Caco-2 (cell line): ENCODE measurements at regions of chr3 and their contacts with region 1.

Region 1: GRCh38 chr3:79521238-79521848 is 246.5 kb downstream of the ROBO1 start:
- DNase-seq: peak in 1 of 2 experiments; percentile 48
- H3K4me3 ChIP-seq: no peak overlapping the region
- H3K4me3 Mint-ChIP-seq: no peak overlapping the region
- H3K27ac Mint-ChIP-seq: no peak overlapping the region
- H3K4me1 ChIP-seq: no peaks in the 10 kb centered on the region
- H3K4me1 Mint-ChIP-seq: no peaks in the 10 kb centered on the region
- H3K27me3 ChIP-seq: no peaks in the 10 kb centered on the region
- H3K27me3 Mint-ChIP-seq: peaks cover 1% of the 10 kb centered on the region
- CTCF ChIP-seq: peak in 1 of 2 experiments; percentile 39

Region 2: DNA sequence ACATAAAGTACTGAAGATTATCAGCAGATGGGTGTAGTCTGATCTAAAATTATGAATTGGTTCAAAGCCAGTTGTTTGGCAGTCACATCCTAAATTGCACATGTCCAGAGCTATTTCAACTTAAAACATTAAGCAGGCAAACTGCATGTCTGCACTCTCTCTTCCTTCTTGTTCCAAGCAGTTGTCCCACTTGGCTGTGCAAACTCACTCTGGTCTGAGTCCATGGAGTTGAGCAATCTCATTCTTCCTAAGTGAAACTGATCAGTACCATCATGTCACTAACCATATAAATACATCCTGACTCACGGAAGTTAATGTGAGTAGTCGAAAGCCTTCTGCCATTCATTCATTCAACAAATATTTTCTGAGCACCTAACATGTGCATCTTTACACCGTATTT is 106.5 kb before region 1 on chr3:
- CTCF ChIA-PET with region 1: no interaction called
- POLR2A ChIA-PET with region 1: no interaction called
- intact Hi-C with region 1: no loop called
- DNase-seq: no peak
- H3K4me3 ChIP-seq: no peak overlapping the region
- H3K4me3 Mint-ChIP-seq: no peak overlapping the region
- H3K27ac Mint-ChIP-seq: no peak overlapping the region
- H3K4me1 ChIP-seq: no peaks in the 10 kb centered on the region
- H3K4me1 Mint-ChIP-seq: no peaks in the 10 kb centered on the region
- H3K27me3 ChIP-seq: no peaks in the 10 kb centered on the region
- H3K27me3 Mint-ChIP-seq: peaks cover 7% of the 10 kb centered on the region
- CTCF ChIP-seq: no peak

Region 3: GRCh38 chr3:79551995-79552394 is 30.7 kb after region 1 on chr3:
- CTCF ChIA-PET with region 1: no interaction called
- POLR2A ChIA-PET with region 1: no interaction called
- intact Hi-C with region 1: loop called (anchors 1 kb)
- DNase-seq: no peak
- H3K4me3 ChIP-seq: no peak overlapping the region
- H3K4me3 Mint-ChIP-seq: no peak overlapping the region
- H3K27ac Mint-ChIP-seq: no peak overlapping the region
- H3K4me1 ChIP-seq: no peaks in the 10 kb centered on the region
- H3K4me1 Mint-ChIP-seq: no peaks in the 10 kb centered on the region
- H3K27me3 ChIP-seq: no peaks in the 10 kb centered on the region
- H3K27me3 Mint-ChIP-seq: no peaks in the 10 kb centered on the region
- CTCF ChIP-seq: peak in 1 of 2 experiments; percentile 22

Region 4: DNA sequence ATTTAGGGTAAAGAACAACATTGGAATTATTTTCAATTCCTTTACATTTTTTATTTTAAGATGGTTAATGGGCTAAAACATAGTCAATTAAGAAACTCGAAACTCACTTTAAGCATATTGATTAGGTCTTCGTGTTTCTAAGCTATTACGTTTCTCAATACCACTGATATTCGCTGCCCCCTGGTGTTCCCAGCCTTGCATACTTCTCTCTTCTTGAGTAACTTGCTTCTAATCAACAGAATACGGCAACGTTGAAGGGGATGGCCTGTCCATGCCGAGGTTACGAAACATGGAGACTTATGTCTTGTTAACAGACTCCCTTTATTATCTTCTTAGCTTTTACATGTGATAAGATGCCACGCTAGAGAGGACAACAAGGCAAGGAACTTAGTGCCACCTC is 202.9 kb after region 1 on chr3:
- CTCF ChIA-PET with region 1: no interaction called
- POLR2A ChIA-PET with region 1: no interaction called
- intact Hi-C with region 1: loop called (anchors 1 kb)
- DNase-seq: peak in 1 of 2 experiments; percentile 4
- H3K4me3 ChIP-seq: no peak overlapping the region
- H3K4me3 Mint-ChIP-seq: no peak overlapping the region
- H3K27ac Mint-ChIP-seq: no peak overlapping the region
- H3K4me1 ChIP-seq: no peaks in the 10 kb centered on the region
- H3K4me1 Mint-ChIP-seq: no peaks in the 10 kb centered on the region
- H3K27me3 ChIP-seq: no peaks in the 10 kb centered on the region
- H3K27me3 Mint-ChIP-seq: no peaks in the 10 kb centered on the region
- CTCF ChIP-seq: no peak

Region 5: DNA sequence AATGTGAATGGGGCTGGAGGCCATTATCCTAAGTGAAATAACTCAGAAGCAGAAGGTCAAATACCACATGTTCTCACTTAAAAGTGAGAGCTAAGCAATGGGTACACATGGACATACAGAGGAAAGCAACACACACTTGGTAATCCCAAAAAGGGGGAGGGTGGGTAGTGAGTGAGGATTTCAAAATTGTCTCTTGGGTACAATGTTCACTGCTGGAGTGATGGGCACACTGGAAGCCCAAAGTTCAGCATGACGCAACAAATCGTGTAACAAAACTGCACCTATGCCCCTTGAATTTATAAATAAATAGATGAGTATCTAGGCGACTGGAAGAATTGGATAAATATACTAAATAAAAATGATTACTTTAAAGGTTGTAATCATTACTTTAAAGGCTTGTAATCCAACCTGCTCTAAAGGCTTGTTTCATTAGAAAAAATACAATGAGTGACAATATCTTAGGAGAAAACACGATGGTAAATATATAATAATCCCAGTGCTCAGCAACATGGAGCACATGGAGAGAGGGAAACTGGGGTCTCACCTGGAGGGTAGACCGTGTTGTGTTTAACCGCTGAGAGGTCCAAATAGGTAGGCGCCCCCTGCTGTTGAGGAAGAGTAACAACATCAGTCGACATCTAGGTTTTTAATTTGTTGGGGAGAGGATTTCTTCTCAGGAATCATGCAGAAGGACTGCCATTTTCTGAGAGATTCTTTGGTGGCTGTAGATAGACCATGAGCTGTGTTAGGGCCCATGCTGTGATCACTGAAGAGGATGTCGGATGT is 325.0 kb after region 1 on chr3:
- CTCF ChIA-PET with region 1: no interaction called
- POLR2A ChIA-PET with region 1: no interaction called
- intact Hi-C with region 1: loop called (anchors 1 kb)
- DNase-seq: peak in 1 of 2 experiments; percentile 21
- H3K4me3 ChIP-seq: no peak overlapping the region
- H3K4me3 Mint-ChIP-seq: no peak overlapping the region
- H3K27ac Mint-ChIP-seq: no peak overlapping the region
- H3K4me1 ChIP-seq: no peaks in the 10 kb centered on the region
- H3K4me1 Mint-ChIP-seq: no peaks in the 10 kb centered on the region
- H3K27me3 ChIP-seq: no peaks in the 10 kb centered on the region
- H3K27me3 Mint-ChIP-seq: peaks cover 7% of the 10 kb centered on the region
- CTCF ChIP-seq: peak; percentile 42 to 62

Region 6: GRCh38 chr3:80153866-80154265 is 632.5 kb after region 1 on chr3:
- CTCF ChIA-PET with region 1: no interaction called
- POLR2A ChIA-PET with region 1: no interaction called
- intact Hi-C with region 1: loop called (anchors 5 kb)
- DNase-seq: no peak
- H3K4me3 ChIP-seq: no peak overlapping the region
- H3K4me3 Mint-ChIP-seq: no peak overlapping the region
- H3K27ac Mint-ChIP-seq: no peak overlapping the region
- H3K4me1 ChIP-seq: no peaks in the 10 kb centered on the region
- H3K4me1 Mint-ChIP-seq: no peaks in the 10 kb centered on the region
- H3K27me3 ChIP-seq: no peaks in the 10 kb centered on the region
- H3K27me3 Mint-ChIP-seq: no peaks in the 10 kb centered on the region
- CTCF ChIP-seq: no peak

Region 7: DNA sequence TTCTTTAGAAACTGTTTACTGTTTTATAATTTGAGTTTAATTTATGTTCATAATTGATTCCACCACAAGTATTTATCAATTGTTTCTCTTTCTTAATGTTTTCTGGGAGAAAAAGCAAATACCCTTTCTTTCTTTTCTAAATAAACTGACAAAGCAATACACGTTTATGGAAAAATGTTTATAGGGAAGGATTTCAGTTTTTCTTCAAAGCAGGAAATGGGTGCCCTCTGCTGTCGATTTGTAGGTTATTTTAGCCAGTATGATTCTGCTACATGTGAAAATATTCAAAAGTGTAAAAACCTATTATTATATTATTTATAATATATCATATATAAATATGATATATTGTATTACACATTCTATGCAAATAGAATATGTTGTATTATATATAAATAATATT is 1167.5 kb after region 1 on chr3:
- CTCF ChIA-PET with region 1: no interaction called
- POLR2A ChIA-PET with region 1: no interaction called
- intact Hi-C with region 1: loop called (anchors 5 kb)
- DNase-seq: peak in 1 of 2 experiments; percentile 19
- H3K4me3 ChIP-seq: no peak overlapping the region
- H3K4me3 Mint-ChIP-seq: no peak overlapping the region
- H3K27ac Mint-ChIP-seq: no peak overlapping the region
- H3K4me1 ChIP-seq: no peaks in the 10 kb centered on the region
- H3K4me1 Mint-ChIP-seq: no peaks in the 10 kb centered on the region
- H3K27me3 ChIP-seq: no peaks in the 10 kb centered on the region
- H3K27me3 Mint-ChIP-seq: no peaks in the 10 kb centered on the region
- CTCF ChIP-seq: peak; percentile 30 to 48